Endothelial cell of umbilical vein (primary cell): ENCODE measurements at regions of chr1 and their contacts with region 1.

Region 1: GRCh38 chr1:224996266-224996665 is 66.8 kb downstream of the DNAH14 start:
- DNase-seq: no peak
- H3K4me3 ChIP-seq: no peak overlapping the region
- H3K27ac ChIP-seq: no peak overlapping the region
- H3K4me1 ChIP-seq: no peaks in the 10 kb centered on the region
- H3K27me3 ChIP-seq: no peaks in the 10 kb centered on the region
- CTCF ChIP-seq: no peak
- POLR2A ChIP-seq: no peak

Region 2: DNA sequence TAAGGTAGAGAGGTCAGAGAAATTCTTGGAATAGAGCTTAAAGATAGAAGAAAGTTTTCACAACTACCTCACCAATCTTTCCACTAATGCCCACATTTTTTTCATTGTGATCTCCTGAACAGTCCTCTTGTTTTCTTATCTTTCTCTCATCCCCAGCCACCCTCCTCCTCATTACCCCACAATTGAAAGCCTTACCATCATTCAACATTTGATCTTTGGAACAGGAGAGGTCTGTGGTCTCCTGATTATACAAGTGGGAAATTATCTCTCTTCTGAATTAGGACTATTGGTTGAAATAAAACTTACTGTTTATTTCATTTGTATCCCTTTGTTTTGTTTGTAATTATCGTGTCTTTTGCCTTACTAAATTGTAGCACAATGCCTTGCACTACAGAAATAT is 37.2 kb before region 1 on chr1:
- CTCF ChIA-PET with region 1: interaction called, 3 read pairs
- POLR2A ChIA-PET with region 1: no interaction called
- dilution Hi-C with region 1: no loop called
- intact Hi-C with region 1: loop called (anchors 1 kb)
- DNase-seq: no peak
- H3K4me3 ChIP-seq: no peak overlapping the region
- H3K27ac ChIP-seq: no peak overlapping the region
- H3K4me1 ChIP-seq: no peaks in the 10 kb centered on the region
- H3K27me3 ChIP-seq: no peaks in the 10 kb centered on the region
- CTCF ChIP-seq: no peak
- POLR2A ChIP-seq: no peak